Esophagus squamous epithelium (tissue), 5 donors: ENCODE measurements at regions of chr1 and their contacts with region 1.

Region 1: GRCh38 chr1:107782217-107782845 is 182.6 kb downstream of the VAV3 start:
- DNase-seq: no peak
- H3K4me3 ChIP-seq: no peak overlapping the region
- H3K27ac ChIP-seq: no peak overlapping the region
- H3K4me1 ChIP-seq: peaks cover 0 to 14% (median 0%) of the 10 kb centered on the region in 3 donors
- H3K27me3 ChIP-seq: no peaks in the 10 kb centered on the region
- CTCF ChIP-seq: peak; percentile 49 to 77 (median 67)
- POLR2A ChIP-seq: no peak

Region 2: DNA sequence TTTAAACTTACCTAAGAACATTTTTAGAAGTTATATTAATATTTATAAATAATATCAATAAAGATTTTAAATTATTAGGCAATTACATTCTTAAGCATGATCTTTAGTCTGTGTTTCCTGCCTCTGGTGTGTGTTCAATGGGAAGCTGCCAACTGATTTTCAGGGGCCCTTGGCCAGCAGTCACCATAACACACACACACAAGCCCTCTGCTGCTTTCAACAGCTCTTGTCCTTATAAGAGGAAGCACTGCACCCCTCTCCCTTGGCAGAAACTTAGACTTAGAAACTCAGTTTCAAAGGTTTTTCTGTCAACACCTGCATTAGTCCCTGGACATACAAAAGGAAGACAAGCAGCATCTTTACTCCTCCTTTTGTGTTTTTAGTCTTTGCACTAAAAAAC is 101.2 kb after region 1 on chr1:
- intact Hi-C with region 1: no loop called
- DNase-seq: no peak
- H3K4me3 ChIP-seq: no peak overlapping the region
- H3K27ac ChIP-seq: no peak overlapping the region
- H3K4me1 ChIP-seq: no peaks in the 10 kb centered on the region
- H3K27me3 ChIP-seq: peaks cover 0 to 14% (median 0%) of the 10 kb centered on the region in 4 donors
- CTCF ChIP-seq: no peak
- POLR2A ChIP-seq: no peak

Region 3: GRCh38 chr1:108125312-108126138 is 343.2 kb after region 1 on chr1:
- intact Hi-C with region 1: loop called (anchors 2 kb)
- DNase-seq: no peak
- H3K4me3 ChIP-seq: no peak overlapping the region
- H3K27ac ChIP-seq: no peak overlapping the region
- H3K4me1 ChIP-seq: peaks cover 0 to 5% (median 0%) of the 10 kb centered on the region in 3 donors
- H3K27me3 ChIP-seq: no peaks in the 10 kb centered on the region
- CTCF ChIP-seq: peak; percentile 89 to 95 (median 92)
- POLR2A ChIP-seq: no peak